A549 (cell line): ENCODE measurements at regions of chr12 and their contacts with region 1.

Region 1: GRCh38 chr12:49503674-49504180 is 35.1 kb upstream of the KCNH3 start:
- DNase-seq: peak; percentile 44 to 88
- ATAC-seq: peak in 1 of 2 experiments; percentile 66; a peak in 3 of 6 replicates
- H3K4me3 ChIP-seq: peak overlapping the region; percentile 25; the same call in 2 of the 3 replicates
- H3K27ac ChIP-seq: peak overlapping the region; percentile 78 to 84
- H3K4me1 ChIP-seq: peaks cover 60% of the 10 kb centered on the region
- CTCF ChIP-seq: no peak
- EP300 ChIP-seq: peak in 1 of 2 experiments; percentile 68; a peak in 1 of 5 replicates
- POLR2A ChIP-seq: no peak
- RAD21 ChIP-seq: no peak

Region 2: GRCh38 chr12:49366652-49367380 is 136.9 kb before region 1 on chr12:
- CTCF ChIA-PET with region 1: interaction called, 484 read pairs
- POLR2A ChIA-PET with region 1: interaction called, 24 read pairs
- DNase-seq: peak; percentile 95 to 97
- ATAC-seq: peak; percentile 87 to 90
- H3K4me3 ChIP-seq: peak overlapping the region; percentile 86
- H3K27ac ChIP-seq: peak overlapping the region; percentile 95 to 96
- H3K4me1 ChIP-seq: peaks cover 36% of the 10 kb centered on the region
- CTCF ChIP-seq: no peak
- EP300 ChIP-seq: no peak
- POLR2A ChIP-seq: peak; percentile 65
- RAD21 ChIP-seq: no peak

Region 3: DNA sequence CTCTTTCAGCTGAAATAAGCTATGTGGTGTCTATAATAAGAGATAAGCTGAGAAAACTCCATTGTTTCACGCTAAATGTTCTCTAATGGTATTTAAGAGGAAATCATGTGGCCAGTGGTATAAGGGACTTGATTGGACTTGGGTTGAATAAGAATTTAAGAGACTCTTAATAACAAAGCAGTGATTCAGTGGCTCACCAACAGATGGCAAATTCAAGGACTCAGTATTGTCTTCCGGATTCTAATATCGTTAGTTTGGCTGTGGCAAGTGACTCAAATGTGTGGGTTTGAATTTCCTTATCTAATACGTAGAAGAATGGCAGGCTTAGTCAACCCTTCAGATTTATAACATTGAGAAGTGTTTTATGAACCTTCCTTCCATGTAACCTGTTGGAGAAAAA is 14.0 kb before region 1 on chr12:
- CTCF ChIA-PET with region 1: interaction called, 20 read pairs
- POLR2A ChIA-PET with region 1: interaction called, 3 read pairs
- DNase-seq: no peak
- ATAC-seq: peak in 1 of 2 experiments; percentile 41; a peak in 3 of 6 replicates
- H3K4me3 ChIP-seq: no peak overlapping the region
- H3K27ac ChIP-seq: no peak overlapping the region
- H3K4me1 ChIP-seq: peaks cover 26% of the 10 kb centered on the region
- CTCF ChIP-seq: no peak
- EP300 ChIP-seq: no peak
- POLR2A ChIP-seq: no peak
- RAD21 ChIP-seq: no peak

Region 4: GRCh38 chr12:50201978-50202521 is 698.3 kb after region 1 on chr12:
- CTCF ChIA-PET with region 1: no interaction called
- POLR2A ChIA-PET with region 1: no interaction called
- DNase-seq: peak in 1 of 2 experiments; percentile 53
- ATAC-seq: peak; percentile 64 to 86; a peak in 5 of 6 replicates
- H3K4me3 ChIP-seq: no peak overlapping the region
- H3K27ac ChIP-seq: 0 out of 6 replicates have a peak overlapping the region, but pooled peaks of 1 of the 2 experiments have one; percentile 1
- H3K4me1 ChIP-seq: peaks cover 20% of the 10 kb centered on the region; the same call in 2 of the 3 replicates
- CTCF ChIP-seq: no peak
- EP300 ChIP-seq: no peak
- POLR2A ChIP-seq: no peak
- RAD21 ChIP-seq: no peak